ENCODE measurements at regions of chr5 and their contacts with region 1.

Region 1: DNA sequence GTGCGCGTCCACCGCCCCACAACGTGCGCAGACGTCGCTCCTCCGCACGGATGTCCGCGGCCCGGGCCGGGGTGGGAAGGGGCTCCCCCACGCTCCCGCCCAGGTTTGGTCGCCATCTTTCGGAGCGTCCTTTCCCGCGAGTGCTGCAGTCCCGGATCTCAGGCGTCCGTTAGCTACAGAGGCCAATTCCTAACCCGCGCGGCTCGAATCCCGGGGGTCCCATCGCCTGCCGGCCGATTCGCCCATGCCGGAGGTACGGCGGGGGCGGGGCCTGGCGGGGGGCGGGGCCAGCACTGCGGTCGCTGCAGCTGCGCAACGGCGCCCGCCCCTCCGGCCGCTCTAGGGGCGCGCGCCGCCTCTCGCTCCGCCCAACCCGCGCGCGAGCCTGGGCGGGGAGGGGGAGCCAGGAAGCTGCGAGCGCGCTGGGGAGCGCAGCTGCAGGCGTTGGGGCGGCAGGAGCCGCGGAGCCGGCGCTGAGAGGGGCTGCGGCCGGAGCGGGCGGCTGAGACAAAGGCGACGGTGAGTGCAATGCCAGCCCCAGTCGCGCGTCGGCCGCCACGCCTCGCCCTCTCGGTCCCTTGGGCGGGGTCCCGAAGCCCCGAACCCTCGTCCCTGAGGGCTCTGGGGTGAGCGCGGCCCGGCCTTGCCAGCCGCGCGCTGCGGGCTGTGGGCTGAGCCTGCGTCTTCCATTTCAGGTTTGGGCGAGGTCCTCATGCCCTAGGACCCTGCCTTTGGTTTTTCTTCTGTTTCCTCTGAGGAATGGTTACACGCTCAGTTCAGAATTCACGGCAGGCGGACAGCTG is at the start of gene CDC42SE2:
- DNase-seq: peak; percentile 83
- ATAC-seq: peak; percentile 87
- H3K4me3 Mint-ChIP-seq: peak within 1 kb of the TSS; percentile 86
- H3K27ac Mint-ChIP-seq: peak within 1 kb of the TSS; percentile 95
- H3K4me1 Mint-ChIP-seq: peaks cover 35% of the 10 kb centered on the region
- H3K27me3 Mint-ChIP-seq: no peaks in the 10 kb centered on the region
- CTCF ChIP-seq: no peak
- total RNA-seq, gene CDC42SE2: 100 to 102 TPM

Region 2: DNA sequence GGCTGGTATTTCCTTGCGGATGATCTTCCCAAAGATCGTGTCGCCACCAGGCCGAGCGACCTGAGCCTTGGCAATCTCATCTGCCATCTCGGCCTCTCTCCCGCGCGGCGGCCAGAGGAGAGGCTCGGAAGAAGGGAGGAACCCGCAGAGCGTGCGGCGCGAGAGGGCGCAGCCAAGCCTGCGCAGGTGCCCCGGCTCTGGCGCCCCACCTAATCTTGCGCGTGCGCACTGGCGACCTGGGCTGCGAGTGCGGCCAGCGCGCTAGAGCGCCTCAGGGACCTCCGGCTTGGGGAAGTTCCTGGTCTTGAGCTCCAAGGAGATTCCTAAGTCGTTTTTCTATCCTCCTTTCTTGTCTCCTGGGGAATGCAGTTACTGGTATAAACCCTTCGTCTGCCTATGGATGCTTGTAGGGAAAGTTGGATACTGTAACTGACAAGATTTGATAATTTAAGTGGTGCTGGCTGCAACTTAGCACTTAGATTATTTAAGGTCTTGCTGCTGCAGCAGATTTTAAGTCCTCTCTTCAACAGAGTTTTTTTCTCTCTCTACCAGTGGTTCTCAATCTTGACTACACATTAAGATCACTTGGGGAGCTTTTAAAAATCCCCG is 98.6 kb before region 1 on chr5 and contains the start of gene HINT1:
- CTCF ChIA-PET with region 1: interaction called, 16 read pairs
- POLR2A ChIA-PET with region 1: interaction called, 59 read pairs
- intact Hi-C with region 1: no loop called
- DNase-seq: peak; percentile 94
- ATAC-seq: peak; percentile 90
- H3K4me3 Mint-ChIP-seq: peak within 1 kb of the TSS; percentile 98
- H3K27ac Mint-ChIP-seq: peak within 1 kb of the TSS; percentile 98
- H3K4me1 Mint-ChIP-seq: peaks cover 38% of the 10 kb centered on the region
- H3K27me3 Mint-ChIP-seq: no peaks in the 10 kb centered on the region
- CTCF ChIP-seq: no peak
- total RNA-seq, gene HINT1: 317 to 322 TPM

Region 3: GRCh38 chr5:131252824-131253171 is 11.1 kb before region 1 on chr5:
- CTCF ChIA-PET with region 1: interaction called, 25 read pairs
- POLR2A ChIA-PET with region 1: interaction called, 170 read pairs
- intact Hi-C with region 1: no loop called
- DNase-seq: peak; percentile 90
- ATAC-seq: peak; percentile 68
- H3K4me3 Mint-ChIP-seq: peak overlapping the region; percentile 86
- H3K27ac Mint-ChIP-seq: peak overlapping the region; percentile 96
- H3K4me1 Mint-ChIP-seq: peaks cover 55% of the 10 kb centered on the region
- H3K27me3 Mint-ChIP-seq: no peaks in the 10 kb centered on the region
- CTCF ChIP-seq: no peak

Region 4: DNA sequence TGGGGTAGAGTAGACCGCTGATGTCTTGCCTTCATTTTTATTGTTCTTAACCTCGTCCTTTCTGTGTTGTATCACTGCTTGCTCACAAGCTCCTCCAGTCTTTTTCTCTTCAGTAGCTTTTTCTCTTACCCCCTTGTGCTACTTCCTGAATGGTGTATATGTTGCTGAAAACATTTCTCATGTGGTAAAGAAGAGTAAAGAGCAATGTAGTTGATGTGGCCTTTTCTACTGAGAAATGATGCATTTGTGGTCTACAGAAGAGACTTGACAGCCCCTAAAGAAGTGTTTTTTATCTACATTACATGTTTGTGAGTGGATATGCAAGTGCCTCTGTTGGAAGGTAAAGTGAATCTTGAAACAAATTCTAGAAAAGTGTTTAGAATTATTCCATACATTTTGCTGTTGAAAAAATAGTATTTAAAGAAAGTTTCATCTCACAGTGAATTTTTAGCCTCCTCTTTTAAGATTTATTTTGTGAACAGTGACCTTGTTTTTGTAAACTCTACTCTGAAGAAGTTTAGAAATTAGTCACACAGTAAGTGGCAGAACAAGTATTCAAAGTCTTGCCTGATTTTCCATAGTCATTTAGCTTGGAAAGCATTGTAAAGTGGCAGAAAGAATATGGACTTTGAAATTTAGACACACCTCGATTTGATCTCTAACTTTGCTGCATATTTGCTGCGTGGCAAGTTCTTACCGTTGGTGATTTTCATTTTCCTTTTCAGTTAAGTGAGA is 17.5 kb after region 1 on chr5:
- CTCF ChIA-PET with region 1: interaction called, 22 read pairs
- POLR2A ChIA-PET with region 1: interaction called, 70 read pairs
- intact Hi-C with region 1: no loop called
- DNase-seq: no peak
- ATAC-seq: peak; percentile 73
- H3K4me3 Mint-ChIP-seq: peak overlapping the region; percentile 74
- H3K27ac Mint-ChIP-seq: peak overlapping the region; percentile 98
- H3K4me1 Mint-ChIP-seq: peaks cover 81% of the 10 kb centered on the region
- H3K27me3 Mint-ChIP-seq: no peaks in the 10 kb centered on the region
- CTCF ChIP-seq: no peak

Region 5: DNA sequence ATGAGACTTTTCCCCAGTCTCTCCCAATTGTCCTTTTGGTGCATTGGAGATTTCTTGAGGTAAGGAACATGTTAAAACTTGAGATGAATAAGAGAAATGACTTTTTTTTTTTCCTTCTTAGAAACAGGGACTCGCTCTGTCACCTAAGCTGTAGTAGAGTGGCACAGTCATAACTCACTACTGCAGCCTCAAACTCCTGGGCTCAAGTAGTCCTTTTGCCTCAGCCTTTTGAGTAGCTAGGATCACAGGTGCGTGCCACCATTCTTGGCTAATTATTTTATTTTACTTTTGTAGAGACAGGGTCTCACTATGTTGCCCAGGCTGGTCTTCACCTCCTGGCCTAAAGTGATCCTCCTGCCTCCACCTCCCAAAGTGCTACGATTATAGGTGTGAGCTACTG is 25.9 kb after region 1 on chr5:
- CTCF ChIA-PET with region 1: interaction called, 10 read pairs
- POLR2A ChIA-PET with region 1: interaction called, 11 read pairs
- intact Hi-C with region 1: no loop called
- DNase-seq: peak; percentile 55
- ATAC-seq: peak; percentile 74
- H3K4me3 Mint-ChIP-seq: peak overlapping the region; percentile 62
- H3K27ac Mint-ChIP-seq: peak overlapping the region; percentile 94
- H3K4me1 Mint-ChIP-seq: peaks cover 70% of the 10 kb centered on the region
- H3K27me3 Mint-ChIP-seq: no peaks in the 10 kb centered on the region
- CTCF ChIP-seq: no peak

Region 6: GRCh38 chr5:131436081-131436480 is 172.2 kb after region 1 on chr5:
- CTCF ChIA-PET with region 1: no interaction called
- POLR2A ChIA-PET with region 1: no interaction called
- intact Hi-C with region 1: no loop called
- DNase-seq: no peak
- ATAC-seq: no peak
- H3K4me3 Mint-ChIP-seq: no peak overlapping the region
- H3K27ac Mint-ChIP-seq: peak overlapping the region; percentile 10
- H3K4me1 Mint-ChIP-seq: peaks cover 2% of the 10 kb centered on the region
- H3K27me3 Mint-ChIP-seq: no peaks in the 10 kb centered on the region
- CTCF ChIP-seq: no peak